Gastrocnemius medialis (tissue), 4 donors: ENCODE measurements at regions of chr6 and their contacts with region 1.

Region 1: GRCh38 chr6:70667711-70668498 is at the start of gene SMAP1:
- DNase-seq: peak; percentile 91 to 95
- ATAC-seq: peak; percentile 70 to 77
- H3K4me3 ChIP-seq: peak within 1 kb of the TSS; percentile 77 to 95 (median 94)
- H3K27ac ChIP-seq: peak within 1 kb of the TSS; percentile 91 to 99 (median 97)
- H3K4me1 ChIP-seq: peaks cover 47 to 64% of the 10 kb centered on the region in 2 donors
- H3K27me3 ChIP-seq: no peaks in the 10 kb centered on the region
- CTCF ChIP-seq: peak in 1 of 5 experiments; percentile 13
- POLR2A ChIP-seq: peak; percentile 87 to 95
- total RNA-seq, gene SMAP1: 29.4 to 36.6 (median 35.8) TPM

Region 2: DNA sequence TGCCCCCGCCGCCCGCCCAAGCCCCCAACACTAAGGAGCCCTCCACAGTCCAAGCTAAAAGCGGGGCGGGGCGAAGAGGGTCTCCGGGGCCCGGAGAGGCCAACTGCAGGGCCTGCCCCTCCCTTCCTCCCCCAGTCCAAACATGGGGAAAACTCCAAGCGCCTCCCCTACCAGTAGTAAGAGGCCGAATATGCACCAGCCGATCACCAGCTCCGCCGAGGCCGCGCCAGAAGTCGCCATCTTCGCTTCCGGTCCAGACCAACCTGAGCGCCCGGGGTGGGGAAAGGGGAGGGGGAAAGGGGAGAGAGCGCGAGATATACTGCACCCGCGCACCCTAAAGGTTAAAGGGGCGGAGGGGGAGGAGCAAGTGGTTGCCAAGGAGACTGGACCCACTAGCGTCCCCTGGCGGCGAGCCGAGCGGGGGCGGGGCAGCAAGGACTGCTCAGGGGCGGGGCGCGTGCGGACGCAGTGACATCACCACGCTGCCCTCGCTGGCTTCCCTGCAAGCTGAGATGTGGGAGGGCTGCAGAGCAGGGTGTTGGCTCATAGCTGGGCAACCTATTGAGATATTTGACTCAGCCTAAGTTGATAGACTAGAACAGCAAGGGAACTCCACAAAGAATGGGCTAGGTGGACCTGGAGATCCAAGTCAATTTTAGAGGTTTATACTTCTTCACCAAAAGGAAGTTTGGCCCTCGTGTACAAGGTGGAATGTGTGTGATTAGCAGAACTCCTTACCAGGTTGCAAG is 871.1 kb before region 1 on chr6 and contains the start of gene LMBRD1:
- in situ Hi-C with region 1: no loop called
- intact Hi-C with region 1: loop called (anchors 2 kb)
- DNase-seq: peak; percentile 91 to 96
- ATAC-seq: peak; percentile 86 to 89
- H3K4me3 ChIP-seq: peak within 1 kb of the TSS; percentile 76 to 99 (median 86)
- H3K27ac ChIP-seq: peak within 1 kb of the TSS; percentile 93 to 99 (median 97)
- H3K4me1 ChIP-seq: peaks cover 21 to 31% of the 10 kb centered on the region in 2 donors
- H3K27me3 ChIP-seq: no peaks in the 10 kb centered on the region
- CTCF ChIP-seq: peak; percentile 21 to 73 (median 66)
- POLR2A ChIP-seq: peak in 1 of 2 donors; percentile 28
- total RNA-seq, gene LMBRD1: 24.4 to 32.9 (median 28.9) TPM

Region 3: GRCh38 chr6:70131528-70131927 is 536.4 kb before region 1 on chr6:
- in situ Hi-C with region 1: no loop called
- intact Hi-C with region 1: no loop called
- DNase-seq: no peak
- ATAC-seq: no peak
- H3K4me3 ChIP-seq: no peak overlapping the region
- H3K27ac ChIP-seq: no peak overlapping the region
- H3K4me1 ChIP-seq: no peaks in the 10 kb centered on the region
- H3K27me3 ChIP-seq: no peaks in the 10 kb centered on the region
- CTCF ChIP-seq: no peak
- POLR2A ChIP-seq: no peak

Region 4: DNA sequence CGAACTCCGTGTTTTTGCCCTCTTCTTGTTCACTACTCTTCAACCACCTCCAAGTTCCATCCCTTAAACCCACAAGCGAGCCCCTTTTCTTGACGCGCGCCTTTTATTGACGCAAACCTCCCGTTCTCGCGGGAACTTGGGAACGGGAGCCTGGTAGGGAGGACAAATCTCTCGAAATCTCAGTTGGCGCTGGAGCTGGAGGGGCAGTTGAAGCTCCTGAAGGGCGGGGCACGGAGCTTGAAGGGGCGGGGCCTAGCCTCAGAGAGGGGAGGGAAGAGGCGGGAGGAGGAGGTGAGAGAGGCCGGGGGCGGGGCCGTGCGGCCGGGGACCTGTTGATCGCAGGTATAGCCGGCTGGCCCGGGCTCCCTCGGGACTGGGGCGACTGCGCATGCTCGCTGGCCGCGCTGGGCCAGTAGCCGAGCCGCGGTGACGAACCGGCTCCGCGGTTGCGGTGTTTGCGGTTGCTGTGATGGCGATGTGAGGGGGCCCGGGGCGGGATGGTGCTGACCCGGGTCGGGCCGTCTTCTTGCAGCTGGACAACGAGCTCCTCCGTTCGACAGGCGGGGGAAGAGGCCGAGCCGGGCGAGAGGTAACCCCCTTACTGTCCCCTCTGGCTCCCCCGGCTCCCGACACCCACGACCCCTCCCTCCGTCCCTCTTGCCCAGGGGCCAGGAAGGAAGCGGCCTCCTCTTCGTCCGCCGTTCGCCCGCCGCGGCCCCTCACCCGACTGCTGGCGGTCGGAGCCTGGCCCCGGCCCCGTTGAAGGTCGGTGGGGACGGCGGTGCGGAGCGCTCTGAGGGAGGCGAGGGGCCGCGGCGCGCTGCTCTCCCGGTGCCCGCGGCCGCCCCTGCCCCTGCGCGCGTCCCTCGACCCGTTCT is 254.6 kb before region 1 on chr6 and contains the start of gene FAM135A:
- in situ Hi-C with region 1: no loop called
- intact Hi-C with region 1: loop called (anchors 1 kb)
- DNase-seq: peak; percentile 91 to 97
- ATAC-seq: peak; percentile 95 to 98
- H3K4me3 ChIP-seq: peak within 1 kb of the TSS; percentile 79 to 93 (median 91)
- H3K27ac ChIP-seq: peak within 1 kb of the TSS; percentile 80 to 86 (median 84)
- H3K4me1 ChIP-seq: peaks cover 14 to 15% of the 10 kb centered on the region in 2 donors
- H3K27me3 ChIP-seq: no peaks in the 10 kb centered on the region
- CTCF ChIP-seq: no peak
- POLR2A ChIP-seq: peak; percentile 58 to 63
- total RNA-seq, gene FAM135A: 9.3 to 18.4 (median 12.9) TPM

Region 5: GRCh38 chr6:70547313-70547712 is 120.6 kb before region 1 on chr6:
- in situ Hi-C with region 1: loop called in 1 of 4 experiments (anchors 10 kb)
- intact Hi-C with region 1: loop called (anchors 5 kb)
- DNase-seq: peak in 1 of 2 donors; percentile 19
- ATAC-seq: peak; percentile 83 to 87
- H3K4me3 ChIP-seq: no peak overlapping the region
- H3K27ac ChIP-seq: peak overlapping the region in 1 of 4 donors; percentile 41
- H3K4me1 ChIP-seq: peaks cover 0 to 18% of the 10 kb centered on the region in 2 donors
- H3K27me3 ChIP-seq: no peaks in the 10 kb centered on the region
- CTCF ChIP-seq: peak in 4 of 5 experiments; percentile 44 to 61 (median 54)
- POLR2A ChIP-seq: no peak

Region 6: DNA sequence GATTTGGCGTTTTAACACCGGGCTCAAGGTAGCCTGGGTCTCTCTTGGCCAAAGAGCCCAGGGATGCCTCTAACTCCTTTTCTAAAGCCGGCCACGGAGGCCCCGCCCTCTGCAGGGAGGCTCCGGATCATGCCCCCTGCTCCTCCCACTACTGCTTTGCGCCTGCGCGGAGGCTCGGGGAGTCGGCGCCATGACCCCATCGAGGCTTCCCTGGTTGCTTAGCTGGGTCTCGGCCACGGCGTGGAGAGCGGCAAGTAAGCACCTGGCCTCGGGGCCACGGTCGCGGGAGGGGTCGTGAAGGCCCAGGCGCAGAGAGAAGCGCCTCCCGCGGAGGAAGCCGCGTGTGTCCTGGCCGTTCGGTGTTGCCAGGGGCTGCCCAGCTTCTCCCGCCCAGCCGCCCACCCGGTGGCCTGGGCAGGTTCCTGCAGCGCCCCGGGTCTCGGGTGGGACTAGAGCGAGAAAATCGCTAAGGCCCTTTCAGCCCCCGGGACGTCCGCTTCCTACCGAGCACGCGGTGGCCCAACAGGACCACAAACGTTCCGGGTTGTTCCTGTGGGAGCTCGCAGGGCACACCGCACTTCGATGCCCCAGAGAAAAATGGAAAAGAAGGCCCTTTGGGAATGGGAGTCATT is 101.0 kb before region 1 on chr6 and contains the start of gene SDHAF4:
- in situ Hi-C with region 1: no loop called
- intact Hi-C with region 1: loop called (anchors 5 kb)
- DNase-seq: peak; percentile 83 to 91
- ATAC-seq: peak; percentile 97
- H3K4me3 ChIP-seq: peak within 1 kb of the TSS; percentile 76 to 94 (median 90)
- H3K27ac ChIP-seq: peak within 1 kb of the TSS; percentile 87 to 96 (median 92)
- H3K4me1 ChIP-seq: peaks cover 0 to 2% of the 10 kb centered on the region in 2 donors
- H3K27me3 ChIP-seq: no peaks in the 10 kb centered on the region
- CTCF ChIP-seq: peak in 2 of 5 experiments; percentile 16 to 42
- POLR2A ChIP-seq: peak; percentile 69 to 74
- total RNA-seq, gene SDHAF4: 2.6 to 10.0 (median 6.2) TPM

Region 7: DNA sequence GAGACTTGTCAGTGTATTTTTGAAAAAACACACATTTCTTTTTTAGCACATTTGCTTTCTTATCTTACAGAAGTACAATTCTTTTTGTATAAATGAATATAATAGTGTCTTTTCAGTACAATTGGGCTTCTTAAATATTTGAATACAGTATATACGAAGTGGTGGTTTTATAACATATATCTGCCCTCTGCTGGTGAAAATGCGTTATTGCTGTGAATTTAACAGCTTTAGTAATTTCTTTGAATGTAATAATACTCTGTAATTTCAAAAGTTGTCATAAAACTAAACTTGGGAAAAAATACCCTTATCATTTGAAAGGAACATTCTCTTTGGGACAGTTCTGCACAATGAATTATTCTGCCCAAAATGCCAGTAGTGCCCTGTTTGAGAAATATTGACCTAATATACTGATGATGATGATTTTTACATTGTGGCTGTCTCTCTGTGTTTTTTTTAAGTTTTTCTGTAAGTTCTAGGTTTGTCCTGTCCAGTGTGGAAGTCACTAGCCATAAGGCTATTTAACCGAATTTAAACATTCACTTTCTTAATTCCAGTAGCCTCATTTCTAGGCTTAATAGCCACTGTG is 18.7 kb after region 1 on chr6:
- in situ Hi-C with region 1: no loop called
- intact Hi-C with region 1: loop called (anchors 1 kb)
- DNase-seq: no peak
- ATAC-seq: no peak
- H3K4me3 ChIP-seq: no peak overlapping the region
- H3K27ac ChIP-seq: peak overlapping the region; percentile 78 to 85 (median 80)
- H3K4me1 ChIP-seq: peaks cover 37 to 49% of the 10 kb centered on the region in 2 donors
- H3K27me3 ChIP-seq: no peaks in the 10 kb centered on the region
- CTCF ChIP-seq: peak; percentile 68 to 88 (median 79)
- POLR2A ChIP-seq: no peak

Region 8: DNA sequence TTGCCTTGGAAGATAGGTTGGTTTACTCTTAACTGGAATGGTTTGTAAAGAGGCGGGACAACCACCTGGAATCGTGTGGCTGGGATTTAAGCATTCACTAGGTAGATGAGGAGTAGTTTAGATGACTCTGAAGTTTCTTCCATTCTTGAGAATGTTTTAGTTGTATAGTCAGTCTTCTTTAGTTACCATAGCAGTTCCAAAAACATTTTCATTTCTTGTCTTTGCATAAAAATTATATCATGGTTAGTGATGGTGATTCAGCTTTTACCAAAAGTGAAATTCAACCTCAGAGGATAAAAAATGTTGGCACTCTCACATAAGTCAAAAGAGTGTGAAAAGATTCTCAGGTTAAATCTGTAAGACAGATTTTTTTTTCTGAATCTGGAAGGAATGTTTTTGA is 70.1 kb after region 1 on chr6:
- in situ Hi-C with region 1: no loop called
- intact Hi-C with region 1: no loop called
- DNase-seq: no peak
- ATAC-seq: no peak
- H3K4me3 ChIP-seq: no peak overlapping the region
- H3K27ac ChIP-seq: no peak overlapping the region
- H3K4me1 ChIP-seq: peaks cover 6 to 31% of the 10 kb centered on the region in 2 donors
- H3K27me3 ChIP-seq: no peaks in the 10 kb centered on the region
- CTCF ChIP-seq: no peak
- POLR2A ChIP-seq: no peak

Region 9: GRCh38 chr6:71420693-71421328 is 752.9 kb after region 1 on chr6:
- in situ Hi-C with region 1: loop called in 1 of 4 experiments (anchors 25 kb)
- intact Hi-C with region 1: no loop called
- DNase-seq: peak; percentile 97 to 98
- ATAC-seq: peak; percentile 92 to 93
- H3K4me3 ChIP-seq: peak overlapping the region; percentile 85 to 95 (median 87)
- H3K27ac ChIP-seq: peak overlapping the region; percentile 96 to 98 (median 98)
- H3K4me1 ChIP-seq: peaks cover 15 to 26% of the 10 kb centered on the region in 2 donors
- H3K27me3 ChIP-seq: no peaks in the 10 kb centered on the region
- CTCF ChIP-seq: peak in 1 of 5 experiments; percentile 11
- POLR2A ChIP-seq: peak; percentile 98 to 99